Calu3 (cell line): ENCODE measurements at regions of chr12 and their contacts with region 1.

Region 1: GRCh38 chr12:120971299-120972179 is 6.8 kb upstream of the HNF1A start:
- DNase-seq: no peak
- H3K4me3 Mint-ChIP-seq: no peak overlapping the region
- H3K27ac Mint-ChIP-seq: peak overlapping the region; percentile 27
- H3K4me1 Mint-ChIP-seq: peaks cover 19% of the 10 kb centered on the region
- H3K27me3 Mint-ChIP-seq: no peaks in the 10 kb centered on the region
- CTCF ChIP-seq: peak; percentile 38

Region 2: DNA sequence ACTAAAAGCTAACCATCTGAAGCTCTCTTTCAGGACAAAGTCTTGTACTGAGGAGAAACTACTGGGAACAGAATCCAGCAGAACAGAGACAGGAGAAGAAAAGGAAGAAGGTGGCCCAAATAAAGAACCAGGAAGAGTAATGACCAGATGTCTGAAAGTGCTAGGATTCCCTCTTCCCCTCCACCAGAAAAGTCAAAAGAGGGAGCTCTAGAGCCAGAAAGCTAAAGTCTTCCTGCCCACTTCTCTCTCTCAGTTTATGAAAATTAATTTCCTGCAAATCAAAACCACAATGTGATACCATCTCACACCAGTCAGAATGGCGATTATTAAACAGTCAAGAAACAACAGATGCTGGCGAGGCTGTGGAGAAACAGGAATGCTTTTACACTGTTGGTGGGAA is 114.6 kb before region 1 on chr12:
- CTCF ChIA-PET with region 1: interaction called, 19 read pairs
- intact Hi-C with region 1: no loop called
- DNase-seq: peak; percentile 45
- H3K4me3 Mint-ChIP-seq: no peak overlapping the region
- H3K27ac Mint-ChIP-seq: peak overlapping the region; percentile 51
- H3K4me1 Mint-ChIP-seq: peaks cover 27% of the 10 kb centered on the region
- H3K27me3 Mint-ChIP-seq: no peaks in the 10 kb centered on the region
- CTCF ChIP-seq: peak; percentile 45

Region 3: GRCh38 chr12:120944645-120945231 is 26.8 kb before region 1 on chr12:
- CTCF ChIA-PET with region 1: interaction called, 13 read pairs
- intact Hi-C with region 1: no loop called
- DNase-seq: peak; percentile 87
- H3K4me3 Mint-ChIP-seq: no peak overlapping the region
- H3K27ac Mint-ChIP-seq: peak overlapping the region; percentile 73
- H3K4me1 Mint-ChIP-seq: peaks cover 8% of the 10 kb centered on the region
- H3K27me3 Mint-ChIP-seq: peaks cover 10% of the 10 kb centered on the region
- CTCF ChIP-seq: peak; percentile 79

Region 4: DNA sequence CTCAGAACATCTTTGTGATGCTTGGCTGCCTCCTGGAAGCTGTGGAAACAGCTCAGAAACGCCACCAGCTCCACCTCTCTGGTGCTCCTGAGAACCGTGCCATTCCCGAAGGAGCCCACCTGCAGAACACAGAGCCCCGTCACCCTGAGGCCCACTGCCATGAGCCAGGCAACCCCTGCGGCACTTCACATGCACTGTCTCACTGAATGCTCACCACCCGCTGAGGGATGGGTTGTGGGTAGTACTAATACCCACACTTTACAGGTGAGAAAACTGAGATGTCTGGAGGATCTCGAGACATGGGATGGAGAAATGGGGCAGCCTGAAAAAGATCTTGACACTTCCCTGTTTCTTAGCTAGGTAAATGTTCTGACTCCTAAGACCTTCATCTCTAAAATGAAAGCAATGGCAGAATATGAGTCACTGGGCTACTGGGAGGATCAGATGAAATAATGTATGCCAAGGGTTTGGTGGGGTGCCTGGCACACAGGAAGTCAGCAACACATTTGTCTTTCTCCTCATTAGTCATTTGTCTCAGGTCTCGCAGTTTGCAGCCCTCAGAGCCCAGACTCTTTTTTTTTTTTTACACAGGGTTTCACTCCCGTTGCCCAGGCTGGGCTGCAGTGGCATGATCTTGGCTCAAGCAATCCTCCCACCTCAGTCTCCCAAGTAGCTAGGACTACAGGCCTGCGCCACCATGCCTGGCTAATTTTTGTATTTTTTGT is 62.2 kb after region 1 on chr12:
- CTCF ChIA-PET with region 1: no interaction called
- intact Hi-C with region 1: no loop called
- DNase-seq: peak; percentile 54
- H3K4me3 Mint-ChIP-seq: no peak overlapping the region
- H3K27ac Mint-ChIP-seq: peak overlapping the region; percentile 10
- H3K4me1 Mint-ChIP-seq: peaks cover 16% of the 10 kb centered on the region
- H3K27me3 Mint-ChIP-seq: no peaks in the 10 kb centered on the region
- CTCF ChIP-seq: no peak

Region 5: GRCh38 chr12:121059031-121059898 is 87.7 kb after region 1 on chr12:
- CTCF ChIA-PET with region 1: no interaction called
- intact Hi-C with region 1: no loop called
- DNase-seq: no peak
- H3K4me3 Mint-ChIP-seq: no peak overlapping the region
- H3K27ac Mint-ChIP-seq: no peak overlapping the region
- H3K4me1 Mint-ChIP-seq: peaks cover 7% of the 10 kb centered on the region
- H3K27me3 Mint-ChIP-seq: no peaks in the 10 kb centered on the region
- CTCF ChIP-seq: no peak

Region 6: GRCh38 chr12:121209624-121210572 is 238.4 kb after region 1 on chr12 and contains the start of gene P2RX4:
- CTCF ChIA-PET with region 1: no interaction called
- intact Hi-C with region 1: no loop called
- DNase-seq: peak; percentile 92
- H3K4me3 Mint-ChIP-seq: peak within 1 kb of the TSS; percentile 73
- H3K27ac Mint-ChIP-seq: peak within 1 kb of the TSS; percentile 66
- H3K4me1 Mint-ChIP-seq: peaks cover 10% of the 10 kb centered on the region
- H3K27me3 Mint-ChIP-seq: no peaks in the 10 kb centered on the region
- CTCF ChIP-seq: peak; percentile 33
- total RNA-seq, gene P2RX4: 38.7 and 39.5 TPM in 2 replicates